GM12878 (cell line): ENCODE measurements at regions of chrX and their contacts with region 1.

Region 1: GRCh38 chrX:20320461-20321159 is 53.9 kb upstream of the RPS6KA3 start:
- DNase-seq: peak; percentile 57
- ATAC-seq: peak; percentile 97
- H3K4me3 ChIP-seq: no peak overlapping the region
- H3K27ac ChIP-seq: no peak overlapping the region
- H3K4me1 ChIP-seq: peaks cover 4% of the 10 kb centered on the region; the same call in 1 of the 2 replicates
- H3K27me3 ChIP-seq: peaks cover 0 to 1% of the 10 kb centered on the region in 2 experiments; a peak in 1 of 4 replicates
- CTCF ChIP-seq: no peak
- EP300 ChIP-seq: peak; percentile 29 to 49; a peak in 2 of 4 replicates
- POLR2A ChIP-seq: no peak
- RAD21 ChIP-seq: no peak

Region 2: DNA sequence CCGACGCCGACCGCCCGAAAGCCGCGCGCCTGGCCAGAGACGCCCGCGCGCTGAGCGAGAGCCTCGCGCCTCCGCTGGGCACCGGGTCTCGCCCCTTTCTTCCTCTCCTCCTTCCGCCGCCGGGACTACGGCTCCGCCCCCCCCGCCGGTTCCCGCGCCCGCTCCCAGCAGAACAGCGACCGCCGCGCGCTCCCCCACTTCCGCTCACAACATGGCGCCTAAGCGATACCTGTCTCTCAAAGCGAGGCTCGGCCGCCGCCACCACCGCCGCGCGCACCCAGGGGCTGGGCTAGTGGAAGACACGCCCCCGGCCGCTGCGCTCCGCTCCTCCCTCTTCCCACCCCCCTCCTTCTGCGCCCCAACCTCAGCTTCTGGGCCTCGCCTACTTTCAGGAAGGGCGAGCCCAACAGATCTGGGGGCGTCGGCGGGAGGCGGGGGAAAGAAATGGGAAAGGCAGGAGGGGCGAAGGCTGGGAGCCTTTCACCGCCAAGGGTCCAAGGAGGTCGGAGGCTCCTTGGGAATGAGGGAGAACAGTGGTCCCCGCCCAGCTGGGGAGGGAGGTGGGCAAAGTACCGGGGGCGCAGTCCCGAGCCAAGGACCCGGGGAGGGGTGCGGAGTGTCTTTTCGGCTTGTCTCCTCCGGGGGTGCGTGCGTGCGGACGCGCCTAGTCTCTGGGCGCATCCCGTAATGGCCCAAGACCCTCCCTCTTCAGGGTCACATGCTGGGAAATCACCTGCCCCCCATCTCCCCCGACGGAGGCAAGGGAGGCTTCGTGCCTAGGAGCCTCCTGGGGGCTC is 53.6 kb before region 1 on chrX and contains the start of gene RPS6KA3:
- CTCF ChIA-PET with region 1: no interaction called
- POLR2A ChIA-PET with region 1: interaction called, 4 read pairs
- RAD21 ChIA-PET with region 1: no interaction called
- SMC1A ChIA-PET with region 1: no interaction called
- in situ Hi-C with region 1: no loop called
- intact Hi-C with region 1: loop called (anchors 5 kb)
- DNase-seq: peak; percentile 44
- ATAC-seq: peak; percentile 87
- H3K4me3 ChIP-seq: peak within 1 kb of the TSS; percentile 70
- H3K27ac ChIP-seq: peak within 1 kb of the TSS; percentile 28
- H3K4me1 ChIP-seq: no peaks in the 10 kb centered on the region
- H3K27me3 ChIP-seq: peaks cover 2 to 6% of the 10 kb centered on the region in 2 experiments; a peak in 1 of 4 replicates
- CTCF ChIP-seq: no peak
- EP300 ChIP-seq: no peak
- POLR2A ChIP-seq: peak; percentile 77
- RAD21 ChIP-seq: no peak
- polyA plus RNA-seq, gene RPS6KA3: 5.2 to 9.1 TPM